ENCODE measurements at regions of chr21 and their contacts with region 1.

Region 1: GRCh38 chr21:31731802-31732596 is at the start of gene SCAF4:
- DNase-seq: peak; percentile 97
- total RNA-seq, gene SCAF4: 22.3 to 26.4 TPM

Region 2: DNA sequence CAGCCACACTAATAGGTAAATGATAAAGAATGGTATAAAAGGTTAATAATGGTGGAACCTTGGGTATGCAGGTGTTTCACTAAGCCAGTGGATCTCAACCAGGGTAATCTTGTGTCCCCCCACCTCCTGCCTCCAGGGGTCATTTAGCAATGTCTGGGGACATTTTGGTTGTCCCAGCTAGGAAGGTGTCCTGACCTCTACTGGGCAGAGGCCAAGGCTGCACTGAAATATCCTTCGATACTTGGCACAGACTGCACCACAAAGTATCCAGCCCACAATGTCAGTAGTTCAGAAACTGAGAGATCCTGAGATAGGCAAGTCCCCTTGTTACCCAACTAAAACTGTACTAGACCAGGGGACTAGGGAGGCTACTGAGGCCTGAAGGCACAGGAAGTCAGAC is 274.3 kb before region 1 on chr21:
- intact Hi-C with region 1: no loop called
- DNase-seq: no peak

Region 3: DNA sequence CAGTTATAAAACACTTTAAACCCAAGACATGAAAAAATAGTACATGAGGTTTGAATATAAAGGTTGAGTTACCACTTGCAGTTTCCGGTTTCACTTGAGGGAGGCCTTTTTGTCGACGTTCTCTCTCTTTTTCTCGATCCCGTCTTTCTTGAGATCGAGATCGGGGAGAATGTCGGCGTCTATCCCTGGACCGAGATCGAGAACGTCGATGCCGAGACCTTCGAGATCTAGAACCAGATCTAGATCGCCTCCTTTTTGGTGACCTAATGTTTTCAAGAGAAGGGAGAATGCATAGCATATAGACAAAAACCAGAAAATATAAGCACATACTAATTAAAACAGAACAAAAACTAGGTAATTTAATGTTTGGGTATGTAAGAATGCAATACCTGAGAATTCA is 38.8 kb before region 1 on chr21:
- intact Hi-C with region 1: loop called in 1 of 2 experiments (anchors 5 kb)
- DNase-seq: no peak

Region 4: DNA sequence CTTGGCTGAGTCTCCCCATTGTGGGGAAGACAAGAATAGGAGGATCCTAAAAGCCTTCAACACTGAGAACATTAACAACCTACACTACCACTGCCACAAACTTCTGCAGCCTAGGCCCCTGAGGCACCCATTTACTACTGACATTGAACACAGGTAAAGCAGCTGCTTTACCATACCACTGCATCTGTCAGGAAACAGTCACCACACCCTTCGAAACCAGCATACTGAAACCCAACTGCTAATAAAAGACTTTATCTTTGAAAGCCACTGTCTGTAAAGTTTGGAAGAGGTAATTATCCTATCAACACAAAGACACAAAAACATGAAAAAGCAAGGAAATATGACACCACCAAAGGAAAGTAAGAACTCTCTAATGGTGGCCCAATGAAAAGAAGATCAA is 1600.1 kb after region 1 on chr21:
- intact Hi-C with region 1: loop called in 1 of 2 experiments (anchors 5 kb)
- DNase-seq: no peak

Region 5: DNA sequence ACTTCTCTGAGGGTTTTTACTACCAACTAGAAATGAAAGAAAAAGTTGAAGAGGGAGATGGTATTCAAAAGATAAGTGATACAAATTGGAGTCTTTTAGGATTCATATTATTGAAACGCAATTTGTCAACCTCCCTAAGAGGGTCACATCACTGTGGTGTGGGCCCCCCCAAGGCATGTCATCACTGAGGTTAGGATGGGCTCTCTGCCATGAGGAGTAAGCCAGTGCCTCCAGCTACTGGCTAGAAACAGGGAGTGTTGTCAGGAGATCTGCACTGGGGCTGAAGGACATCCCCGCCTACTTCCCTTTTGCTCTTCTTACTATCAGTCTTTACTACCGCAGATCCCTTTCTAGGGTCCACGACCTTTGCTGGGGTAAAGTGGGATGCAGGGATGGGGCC is 1936.2 kb after region 1 on chr21:
- intact Hi-C with region 1: no loop called
- DNase-seq: no peak

Measured in posterior vena cava (tissue), 2 donors.